ENCODE measurements at regions of chr3 and their contacts with region 1.

Region 1: GRCh38 chr3:100463002-100463401 is 29.4 kb upstream of the TMEM45A start:
- DNase-seq: peak; percentile 35
- ATAC-seq: peak; percentile 95
- H3K4me3 ChIP-seq: no peak overlapping the region
- H3K27ac ChIP-seq: no peak overlapping the region
- H3K4me1 ChIP-seq: peaks cover 10% of the 10 kb centered on the region
- H3K27me3 ChIP-seq: no peaks in the 10 kb centered on the region
- CTCF ChIP-seq: peak; percentile 65 to 78 (median 71); a peak in 5 of 6 replicates
- EP300 ChIP-seq: no peak
- POLR2A ChIP-seq: no peak
- RAD21 ChIP-seq: peak; percentile 99

Region 2: GRCh38 chr3:100047455-100048141 is 415.4 kb before region 1 on chr3:
- CTCF ChIA-PET with region 1: no interaction called
- POLR2A ChIA-PET with region 1: no interaction called
- RAD21 ChIA-PET with region 1: no interaction called
- SMC1A ChIA-PET with region 1: no interaction called
- in situ Hi-C with region 1: no loop called
- intact Hi-C with region 1: no loop called
- DNase-seq: peak; percentile 77
- ATAC-seq: peak; percentile 93
- H3K4me3 ChIP-seq: peak overlapping the region; percentile 53
- H3K27ac ChIP-seq: peak overlapping the region; percentile 21; the same call in 1 of the 2 replicates
- H3K4me1 ChIP-seq: peaks cover 43% of the 10 kb centered on the region
- H3K27me3 ChIP-seq: no peaks in the 10 kb centered on the region
- CTCF ChIP-seq: no peak
- EP300 ChIP-seq: peak; percentile 41 to 73
- POLR2A ChIP-seq: no peak
- RAD21 ChIP-seq: no peak

Region 3: GRCh38 chr3:100260685-100261484 is 202.1 kb before region 1 on chr3 and contains the start of gene TBC1D23:
- CTCF ChIA-PET with region 1: no interaction called
- POLR2A ChIA-PET with region 1: no interaction called
- RAD21 ChIA-PET with region 1: no interaction called
- SMC1A ChIA-PET with region 1: no interaction called
- in situ Hi-C with region 1: no loop called
- intact Hi-C with region 1: no loop called
- DNase-seq: peak; percentile 98
- ATAC-seq: peak; percentile 99
- H3K4me3 ChIP-seq: peak within 1 kb of the TSS; percentile 95
- H3K27ac ChIP-seq: peak within 1 kb of the TSS; percentile 84
- H3K4me1 ChIP-seq: no peaks in the 10 kb centered on the region
- H3K27me3 ChIP-seq: no peaks in the 10 kb centered on the region
- CTCF ChIP-seq: no peak
- EP300 ChIP-seq: no peak
- POLR2A ChIP-seq: peak; percentile 87
- RAD21 ChIP-seq: no peak
- polyA plus RNA-seq, gene TBC1D23: 13.5 to 16.2 TPM

Region 4: DNA sequence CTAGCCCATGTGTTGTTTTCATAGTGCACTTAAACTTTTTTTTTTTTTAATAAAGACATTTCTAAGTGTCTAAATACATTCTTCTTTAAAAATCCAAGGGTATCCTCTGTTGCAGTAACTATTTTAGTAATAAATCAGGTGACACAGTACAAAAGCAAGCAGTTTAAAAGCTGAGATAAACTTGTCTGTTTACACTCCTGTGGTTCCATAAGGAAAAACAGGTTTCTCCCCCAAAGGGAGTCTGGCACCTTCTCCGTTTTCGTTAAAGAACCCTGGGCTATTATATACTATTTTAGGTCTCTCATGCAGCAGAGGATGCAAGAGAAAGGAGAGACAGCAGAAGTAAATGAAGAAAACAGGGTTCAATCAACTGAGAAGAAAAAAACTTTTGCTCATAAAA is 13.8 kb before region 1 on chr3:
- CTCF ChIA-PET with region 1: interaction called, 18 read pairs
- POLR2A ChIA-PET with region 1: no interaction called
- RAD21 ChIA-PET with region 1: interaction called, 4 read pairs
- SMC1A ChIA-PET with region 1: interaction called, 10 read pairs
- in situ Hi-C with region 1: no loop called
- intact Hi-C with region 1: no loop called
- DNase-seq: no peak
- ATAC-seq: no peak
- H3K4me3 ChIP-seq: no peak overlapping the region
- H3K27ac ChIP-seq: no peak overlapping the region
- H3K4me1 ChIP-seq: no peaks in the 10 kb centered on the region
- H3K27me3 ChIP-seq: no peaks in the 10 kb centered on the region
- CTCF ChIP-seq: no peak
- EP300 ChIP-seq: no peak
- POLR2A ChIP-seq: no peak
- RAD21 ChIP-seq: no peak

Region 5: DNA sequence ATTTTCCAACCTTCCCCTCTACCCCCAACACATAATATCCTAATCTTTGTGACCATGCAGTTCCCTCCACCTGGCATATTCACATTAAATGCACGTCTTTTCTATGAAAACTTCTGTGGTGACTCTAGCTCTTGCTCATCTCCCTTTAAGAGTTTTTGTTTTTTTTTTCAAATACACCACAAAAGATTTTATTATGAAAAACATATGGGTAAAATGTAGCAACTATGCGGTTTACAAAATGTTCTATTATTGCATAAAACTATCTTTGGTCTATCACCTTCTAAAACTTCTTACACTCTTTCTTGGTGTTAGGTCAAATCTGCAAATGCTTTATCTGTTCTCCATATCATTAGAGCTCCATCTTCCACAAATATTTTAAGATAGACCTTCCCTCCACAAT is 107.8 kb after region 1 on chr3:
- CTCF ChIA-PET with region 1: interaction called, 3 read pairs
- POLR2A ChIA-PET with region 1: no interaction called
- RAD21 ChIA-PET with region 1: interaction called, 6 read pairs
- SMC1A ChIA-PET with region 1: interaction called, 11 read pairs
- in situ Hi-C with region 1: no loop called
- intact Hi-C with region 1: no loop called
- DNase-seq: no peak
- ATAC-seq: no peak
- H3K4me3 ChIP-seq: no peak overlapping the region
- H3K27ac ChIP-seq: no peak overlapping the region
- H3K4me1 ChIP-seq: no peaks in the 10 kb centered on the region
- H3K27me3 ChIP-seq: no peaks in the 10 kb centered on the region
- CTCF ChIP-seq: no peak
- EP300 ChIP-seq: no peak
- POLR2A ChIP-seq: no peak
- RAD21 ChIP-seq: no peak

Region 6: DNA sequence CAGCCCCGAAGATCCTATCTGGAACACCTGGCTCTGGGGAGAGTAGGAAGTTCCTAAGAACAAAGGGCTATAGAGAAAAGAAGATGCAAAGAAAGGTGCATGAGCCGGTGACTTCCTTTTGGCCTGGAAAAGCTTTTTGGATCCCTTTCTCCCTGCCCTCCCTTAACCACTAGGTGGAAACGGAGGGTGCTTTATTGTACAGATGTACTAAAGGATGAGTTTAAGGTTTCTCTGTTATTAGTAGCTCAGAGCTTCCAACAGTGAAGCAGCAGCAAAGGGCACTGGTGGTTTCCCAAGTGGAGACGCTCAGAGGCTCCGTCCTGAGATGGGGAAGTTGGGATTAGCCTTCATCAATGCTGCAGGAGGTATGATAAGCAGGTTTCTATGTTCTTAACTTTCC is 140.5 kb after region 1 on chr3:
- CTCF ChIA-PET with region 1: interaction called, 22 read pairs
- POLR2A ChIA-PET with region 1: interaction called, 3 read pairs
- RAD21 ChIA-PET with region 1: interaction called, 42 read pairs
- SMC1A ChIA-PET with region 1: interaction called, 23 read pairs
- in situ Hi-C with region 1: no loop called
- intact Hi-C with region 1: no loop called
- DNase-seq: no peak
- ATAC-seq: peak; percentile 58
- H3K4me3 ChIP-seq: peak overlapping the region; percentile 55
- H3K27ac ChIP-seq: peak overlapping the region; percentile 54
- H3K4me1 ChIP-seq: peaks cover 15% of the 10 kb centered on the region
- H3K27me3 ChIP-seq: no peaks in the 10 kb centered on the region
- CTCF ChIP-seq: peak; percentile 24 to 47 (median 34); a peak in 4 of 6 replicates
- EP300 ChIP-seq: 0 out of 4 replicates have a peak, but pooled peaks of 1 of the 2 experiments have one; percentile 9
- POLR2A ChIP-seq: no peak
- RAD21 ChIP-seq: peak; percentile 54

Region 7: GRCh38 chr3:100730524-100730923 is 267.5 kb after region 1 on chr3:
- CTCF ChIA-PET with region 1: interaction called, 3 read pairs
- POLR2A ChIA-PET with region 1: no interaction called
- RAD21 ChIA-PET with region 1: interaction called, 7 read pairs
- SMC1A ChIA-PET with region 1: no interaction called
- in situ Hi-C with region 1: no loop called
- intact Hi-C with region 1: loop called (anchors 5 kb)
- DNase-seq: peak; percentile 9
- ATAC-seq: peak; percentile 53
- H3K4me3 ChIP-seq: no peak overlapping the region
- H3K27ac ChIP-seq: no peak overlapping the region
- H3K4me1 ChIP-seq: no peaks in the 10 kb centered on the region; the same call in 1 of the 2 replicates
- H3K27me3 ChIP-seq: no peaks in the 10 kb centered on the region
- CTCF ChIP-seq: no peak
- EP300 ChIP-seq: no peak
- POLR2A ChIP-seq: no peak
- RAD21 ChIP-seq: no peak

Region 8: DNA sequence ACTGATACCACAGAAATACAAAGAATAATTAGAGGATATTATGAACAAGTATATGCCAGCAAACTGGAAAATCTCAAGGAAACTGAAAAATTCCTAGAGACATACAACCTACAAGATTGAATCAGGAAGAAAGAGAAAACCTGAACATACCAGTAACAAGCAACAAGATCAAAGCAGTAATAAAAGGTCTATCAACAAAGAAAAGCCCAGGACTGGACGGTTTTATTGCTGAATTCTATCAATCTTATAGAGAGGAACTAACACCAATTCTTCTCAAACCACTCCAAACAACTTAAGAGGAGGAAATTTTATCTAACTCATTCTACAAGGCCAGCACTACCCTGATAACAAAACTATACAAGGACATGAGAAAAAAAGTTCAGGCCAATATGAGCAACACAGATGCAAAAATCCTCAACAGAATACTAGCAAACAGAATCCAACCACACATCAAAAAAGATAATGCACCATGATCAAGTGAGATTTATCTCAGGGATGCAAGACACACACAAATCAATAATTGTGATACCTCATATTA is 928.5 kb after region 1 on chr3:
- CTCF ChIA-PET with region 1: no interaction called
- POLR2A ChIA-PET with region 1: no interaction called
- RAD21 ChIA-PET with region 1: no interaction called
- SMC1A ChIA-PET with region 1: no interaction called
- in situ Hi-C with region 1: no loop called
- intact Hi-C with region 1: no loop called
- DNase-seq: no peak
- ATAC-seq: no peak
- H3K4me3 ChIP-seq: no peak overlapping the region
- H3K27ac ChIP-seq: no peak overlapping the region
- H3K4me1 ChIP-seq: no peaks in the 10 kb centered on the region
- H3K27me3 ChIP-seq: no peaks in the 10 kb centered on the region
- CTCF ChIP-seq: no peak
- EP300 ChIP-seq: no peak
- POLR2A ChIP-seq: no peak
- RAD21 ChIP-seq: no peak